Heart left ventricle (tissue), 16 donors: ENCODE measurements at regions of chr5 and their contacts with region 1.

Region 1: DNA sequence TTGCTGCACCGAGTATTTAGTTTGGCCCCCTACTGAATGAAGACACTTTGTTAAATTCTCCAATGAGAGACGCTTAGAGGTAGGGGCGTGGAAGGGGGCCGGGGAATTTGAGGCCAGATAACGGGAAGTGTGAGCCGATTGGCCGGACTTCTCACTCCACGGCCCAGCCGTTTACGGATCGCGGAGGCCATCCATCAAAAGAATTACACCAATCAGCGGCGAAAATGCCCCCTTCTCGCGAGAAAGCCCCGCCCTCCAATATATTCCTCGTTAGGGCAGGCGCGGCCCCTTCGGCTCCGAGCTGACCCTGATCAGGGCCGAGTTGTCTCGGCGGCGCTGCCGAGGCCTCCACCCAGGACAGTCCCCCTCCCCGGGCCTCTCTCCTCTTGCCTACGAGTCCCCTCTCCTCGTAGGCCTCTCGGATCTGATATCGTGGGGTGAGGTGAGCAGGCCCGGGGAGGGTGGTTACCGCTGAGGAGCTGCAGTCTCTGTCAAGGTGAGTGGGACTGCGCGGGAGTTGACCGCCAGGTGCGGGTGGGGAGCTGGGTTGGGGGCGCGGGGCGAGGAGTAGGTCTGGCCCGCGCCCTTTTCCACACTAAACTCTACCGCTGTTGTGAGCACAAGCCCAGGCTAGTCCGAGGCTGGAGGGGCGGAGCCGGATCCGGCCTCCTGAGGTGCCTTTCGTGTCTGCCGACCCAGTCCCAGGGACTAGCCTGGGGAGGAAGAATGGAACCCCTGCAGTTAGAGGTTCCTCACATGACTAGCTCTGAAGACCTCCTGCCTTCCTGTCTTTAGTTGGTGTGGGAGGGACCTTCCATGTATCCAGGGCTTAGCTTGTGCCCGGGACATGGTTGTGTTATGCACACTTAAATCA is at the start of gene CCNG1:
- DNase-seq: peak; percentile 95 to 97 (median 96)
- ATAC-seq: peak; percentile 95 to 97 (median 96)
- H3K4me3 ChIP-seq: peak within 1 kb of the TSS; percentile 63 to 99 (median 88)
- H3K27ac ChIP-seq: peak within 1 kb of the TSS; percentile 81 to 95 (median 92)
- H3K4me1 ChIP-seq: peaks cover 0 to 54% (median 25%) of the 10 kb centered on the region in 12 donors
- H3K27me3 ChIP-seq: no peaks in the 10 kb centered on the region
- CTCF ChIP-seq: peak in 1 of 12 donors; percentile 4
- POLR2A ChIP-seq: peak; percentile 59 to 85
- total RNA-seq, gene CCNG1: 52.3 to 109 (median 78.3) TPM

Region 2: GRCh38 chr5:163459922-163460766 is 22.6 kb after region 1 on chr5 and contains the starts of genes HMMR and NUDCD2:
- intact Hi-C with region 1: loop called in 1 of 10 experiments (anchors 2 kb)
- DNase-seq: peak; percentile 94 to 99 (median 96)
- ATAC-seq: peak; percentile 95 to 98 (median 97)
- H3K4me3 ChIP-seq: peak within 1 kb of the TSS; percentile 36 to 94 (median 75)
- H3K27ac ChIP-seq: peak within 1 kb of the TSS; percentile 84 to 99 (median 94)
- H3K4me1 ChIP-seq: peaks cover 0 to 30% (median 23%) of the 10 kb centered on the region in 12 donors
- H3K27me3 ChIP-seq: no peaks in the 10 kb centered on the region
- CTCF ChIP-seq: peak in 5 of 12 donors; percentile 13 to 48 (median 33)
- POLR2A ChIP-seq: peak; percentile 17 to 85
- total RNA-seq, gene HMMR: 0.47 to 6.6 (median 1.3) TPM in 8 of 9 donors, not detected in the other
- total RNA-seq, gene NUDCD2: 1.6 to 17.1 (median 13.4) TPM

Region 3: DNA sequence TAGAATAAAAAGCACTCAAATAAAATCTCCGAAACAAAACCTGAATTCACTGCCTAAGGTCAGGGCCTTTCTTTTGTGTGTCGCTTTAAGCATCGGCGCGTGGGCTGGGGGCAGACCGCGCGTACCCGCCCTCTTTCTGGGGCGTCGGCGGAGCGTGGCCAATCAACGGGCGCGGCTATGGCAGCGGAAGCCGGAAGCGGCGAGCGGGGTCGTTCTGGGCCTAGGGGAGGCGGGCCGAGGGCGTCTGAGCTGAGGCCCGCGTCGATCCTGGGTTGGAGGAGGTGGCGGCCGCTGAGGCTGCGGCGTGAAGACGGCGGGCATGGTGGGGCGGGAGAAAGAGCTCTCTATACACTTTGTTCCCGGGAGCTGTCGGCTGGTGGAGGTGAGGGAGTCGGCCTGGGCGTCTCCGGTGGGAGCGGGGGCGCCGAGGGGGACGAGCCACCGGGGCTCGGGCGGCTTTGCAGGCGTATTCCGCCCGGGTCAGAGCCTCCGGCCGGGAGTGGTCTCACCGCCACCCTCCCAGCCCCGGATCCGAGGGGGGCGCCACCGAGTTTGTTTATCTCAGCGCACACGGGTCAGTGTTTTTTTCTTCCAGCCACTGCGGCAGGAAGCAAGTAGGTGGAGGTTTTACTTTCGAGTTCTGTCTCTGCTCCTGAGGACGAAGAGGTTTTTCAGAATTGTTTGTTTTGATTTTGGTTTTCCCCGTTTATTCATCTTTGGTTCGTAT is 68.0 kb after region 1 on chr5 and contains the start of gene MAT2B:
- intact Hi-C with region 1: loop called in 1 of 10 experiments (anchors 1 kb)
- DNase-seq: peak; percentile 97 to 98 (median 97)
- ATAC-seq: peak; percentile 97 to 98 (median 98)
- H3K4me3 ChIP-seq: peak within 1 kb of the TSS; percentile 18 to 90 (median 77)
- H3K27ac ChIP-seq: peak within 1 kb of the TSS; percentile 89 to 99 (median 96)
- H3K4me1 ChIP-seq: peaks cover 11 to 61% (median 45%) of the 10 kb centered on the region in 12 donors
- H3K27me3 ChIP-seq: no peaks in the 10 kb centered on the region
- CTCF ChIP-seq: peak; percentile 33 to 75 (median 55)
- POLR2A ChIP-seq: peak; percentile 14 to 90
- total RNA-seq, gene MAT2B: 46.3 to 61.6 (median 59.3) TPM